Activated T-helper 1 cell treated with anti-CD3 and anti-CD28 coated beads, Interleukin-12 subunit alpha, Interleukin-12 subunit beta, Interleukin-2, Interleukin-4 antibody, amounts not matched to agents 30 ng/mL and 10 ng/mL and 1 ng/mL, durations not matched to agents 14 hours and 24 hours and 36 hours (primary cell): ENCODE measurements at regions of chr13 and their contacts with region 1.

Region 1: GRCh38 chr13:102845630-102846260 is at the start of gene ERCC5:
- DNase-seq: peak; percentile 94
- H3K4me3 Mint-ChIP-seq: peak within 1 kb of the TSS; percentile 95
- H3K27ac Mint-ChIP-seq: peak within 1 kb of the TSS; percentile 99
- H3K4me1 Mint-ChIP-seq: peaks cover 51% of the 10 kb centered on the region
- H3K27me3 Mint-ChIP-seq: no peaks in the 10 kb centered on the region
- total RNA-seq, gene ERCC5: 40.3 and 42.4 TPM in 2 replicates

Region 2: DNA sequence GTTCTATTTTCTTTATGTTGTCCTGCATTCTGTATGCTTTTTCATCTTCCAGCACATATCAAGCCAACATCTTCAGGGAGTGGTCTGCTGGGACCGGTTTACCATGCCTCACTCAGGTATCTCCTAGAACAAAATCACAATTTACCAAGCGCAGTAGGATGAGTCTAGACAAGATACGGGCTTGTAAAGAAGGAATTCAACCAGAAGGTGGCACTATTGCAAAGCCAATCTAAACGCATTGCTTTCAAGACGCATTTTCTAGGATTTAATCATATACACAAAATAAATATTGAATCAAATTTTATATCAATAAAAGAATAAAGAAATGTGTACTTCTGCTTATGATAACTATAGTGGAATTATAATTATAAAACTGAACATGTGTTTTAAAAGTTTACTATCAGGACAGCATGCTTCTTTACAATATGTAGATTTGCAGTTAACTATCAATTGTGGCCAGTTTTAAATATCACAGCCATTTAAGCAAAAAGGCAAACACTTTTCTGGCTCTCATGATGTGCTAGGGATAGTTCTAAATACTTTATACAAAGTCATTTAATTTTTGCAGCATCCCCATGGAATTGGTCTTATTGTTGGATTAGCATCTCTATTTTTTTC is 265.1 kb before region 1 on chr13:
- intact Hi-C with region 1: loop called (anchors 1 kb)
- DNase-seq: peak; percentile 22
- H3K4me3 Mint-ChIP-seq: no peak overlapping the region
- H3K27ac Mint-ChIP-seq: no peak overlapping the region
- H3K4me1 Mint-ChIP-seq: peaks cover 14% of the 10 kb centered on the region
- H3K27me3 Mint-ChIP-seq: peaks cover 7% of the 10 kb centered on the region

Region 3: DNA sequence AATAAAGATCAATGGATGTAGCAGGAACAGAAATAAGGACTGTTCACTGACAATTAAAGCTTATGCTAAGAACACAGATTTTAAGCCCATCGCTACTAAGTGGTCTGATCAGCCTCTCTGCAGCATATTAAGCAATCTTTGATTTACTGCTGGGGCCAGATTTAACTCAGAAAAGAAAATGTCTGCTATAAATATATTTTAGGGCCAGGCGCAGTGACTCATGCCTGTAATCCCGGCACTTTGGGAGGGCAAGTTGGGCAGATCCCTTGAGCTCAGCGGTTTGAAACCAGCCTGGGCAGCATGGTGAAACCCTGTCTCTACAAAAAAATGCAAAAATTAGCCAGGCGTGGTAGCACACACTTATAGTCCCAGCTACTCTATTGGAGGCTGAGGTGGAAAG is 193.9 kb before region 1 on chr13:
- intact Hi-C with region 1: loop called (anchors 2 kb)
- DNase-seq: no peak
- H3K4me3 Mint-ChIP-seq: no peak overlapping the region
- H3K27ac Mint-ChIP-seq: no peak overlapping the region
- H3K4me1 Mint-ChIP-seq: peaks cover 13% of the 10 kb centered on the region
- H3K27me3 Mint-ChIP-seq: no peaks in the 10 kb centered on the region

Region 4: DNA sequence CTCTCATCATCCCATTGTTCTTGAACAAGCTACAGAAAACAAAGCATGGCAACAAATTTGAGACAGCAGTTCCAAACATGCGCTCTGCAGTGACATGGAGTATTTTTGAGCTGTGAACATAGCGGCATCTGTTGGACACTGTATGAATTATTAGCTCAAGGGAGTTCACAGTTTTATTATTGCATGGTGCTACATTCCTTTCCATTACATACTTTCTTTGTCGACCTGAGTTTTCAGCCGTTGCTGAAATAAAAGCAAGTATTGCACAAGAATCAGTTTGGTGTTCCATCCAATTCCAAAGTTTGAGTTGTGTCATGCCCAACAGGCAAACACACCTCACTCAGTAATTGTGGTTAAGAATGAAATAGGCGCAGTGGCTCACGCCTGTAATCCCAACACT is 120.8 kb before region 1 on chr13:
- intact Hi-C with region 1: loop called (anchors 1 kb)
- DNase-seq: no peak
- H3K4me3 Mint-ChIP-seq: no peak overlapping the region
- H3K27ac Mint-ChIP-seq: no peak overlapping the region
- H3K4me1 Mint-ChIP-seq: peaks cover 13% of the 10 kb centered on the region
- H3K27me3 Mint-ChIP-seq: peaks cover 20% of the 10 kb centered on the region

Region 5: GRCh38 chr13:102779436-102780159 is 66.1 kb before region 1 on chr13:
- intact Hi-C with region 1: loop called (anchors 1 kb)
- DNase-seq: peak; percentile 37
- H3K4me3 Mint-ChIP-seq: peak overlapping the region; percentile 57
- H3K27ac Mint-ChIP-seq: peak overlapping the region; percentile 94
- H3K4me1 Mint-ChIP-seq: peaks cover 50% of the 10 kb centered on the region
- H3K27me3 Mint-ChIP-seq: no peaks in the 10 kb centered on the region

Region 6: DNA sequence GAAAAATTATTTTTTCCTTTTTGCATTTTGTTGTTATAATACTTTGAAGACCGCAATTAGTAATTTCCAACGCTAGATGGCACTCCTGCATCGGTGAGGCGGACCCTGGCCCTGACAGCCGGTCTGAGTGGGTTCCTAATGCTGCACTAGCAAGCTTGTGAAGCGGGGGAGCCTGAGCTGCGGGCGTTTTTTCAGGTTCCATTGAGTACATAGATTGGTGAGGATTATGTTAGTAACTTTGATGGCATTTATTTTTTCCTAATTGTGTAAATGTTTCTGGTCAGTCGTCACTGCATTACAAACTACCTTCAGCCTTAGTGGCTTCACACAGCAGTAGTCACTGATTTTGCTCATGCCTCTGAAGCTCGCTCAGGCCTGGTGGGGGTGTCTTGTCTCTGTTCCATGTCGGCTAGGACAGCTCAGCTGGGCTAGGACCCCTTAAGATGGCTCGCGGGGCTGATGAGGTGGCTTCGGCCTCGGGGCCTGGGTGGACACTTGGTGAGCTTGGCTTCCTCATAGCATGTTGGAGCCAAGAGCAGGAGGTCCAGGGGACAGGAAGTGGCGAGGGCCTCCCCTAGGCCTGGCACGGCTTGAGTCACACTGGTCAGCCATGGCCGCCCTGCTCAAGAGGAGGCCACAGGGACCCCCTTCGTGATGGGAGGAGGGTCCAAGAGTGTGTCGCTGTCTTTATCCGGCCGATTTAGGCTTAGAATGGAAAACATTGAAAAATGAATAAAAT is 25.1 kb after region 1 on chr13:
- intact Hi-C with region 1: loop called (anchors 1 kb)
- DNase-seq: peak; percentile 17
- H3K4me3 Mint-ChIP-seq: no peak overlapping the region
- H3K27ac Mint-ChIP-seq: peak overlapping the region; percentile 13
- H3K4me1 Mint-ChIP-seq: peaks cover 21% of the 10 kb centered on the region
- H3K27me3 Mint-ChIP-seq: no peaks in the 10 kb centered on the region